ENCODE measurements at regions of chr15 and their contacts with region 1.

Region 1: DNA sequence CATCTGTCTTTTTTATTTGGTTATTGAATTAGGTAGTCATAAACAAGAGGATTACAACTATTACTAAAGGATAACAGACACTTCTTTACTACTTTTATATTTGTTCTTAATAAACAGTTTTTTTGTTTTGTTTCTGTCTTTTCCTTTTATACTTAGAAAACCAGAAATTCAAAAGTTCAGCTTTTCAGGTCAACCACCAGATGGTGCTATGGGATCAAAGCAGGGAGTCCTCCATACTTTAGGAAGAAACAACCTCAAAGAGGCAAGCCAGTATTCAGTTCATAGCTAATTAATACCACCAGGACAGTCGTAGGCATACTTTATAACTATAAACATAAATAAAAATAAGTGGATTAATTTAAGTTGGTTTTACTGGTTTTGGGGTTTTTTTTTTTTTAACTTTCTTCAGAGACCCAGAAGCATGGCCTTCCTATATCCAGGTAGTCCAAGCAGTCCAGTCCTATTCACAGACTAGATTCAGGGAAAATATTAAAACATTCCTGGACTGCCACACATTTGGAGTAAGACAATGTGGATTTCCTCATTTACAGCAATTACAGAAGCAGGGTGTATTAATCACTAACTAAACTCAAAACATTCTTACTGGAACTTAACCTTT is 16.0 kb upstream of the EID1 start:
- DNase-seq: no peak
- ATAC-seq: peak in 3 of 4 donors; percentile 56 to 85 (median 61)
- H3K4me3 ChIP-seq: no peak overlapping the region
- H3K27ac ChIP-seq: no peak overlapping the region
- H3K4me1 ChIP-seq: no peaks in the 10 kb centered on the region
- H3K27me3 ChIP-seq: no peaks in the 10 kb centered on the region
- CTCF ChIP-seq: peak; percentile 94

Region 2: DNA sequence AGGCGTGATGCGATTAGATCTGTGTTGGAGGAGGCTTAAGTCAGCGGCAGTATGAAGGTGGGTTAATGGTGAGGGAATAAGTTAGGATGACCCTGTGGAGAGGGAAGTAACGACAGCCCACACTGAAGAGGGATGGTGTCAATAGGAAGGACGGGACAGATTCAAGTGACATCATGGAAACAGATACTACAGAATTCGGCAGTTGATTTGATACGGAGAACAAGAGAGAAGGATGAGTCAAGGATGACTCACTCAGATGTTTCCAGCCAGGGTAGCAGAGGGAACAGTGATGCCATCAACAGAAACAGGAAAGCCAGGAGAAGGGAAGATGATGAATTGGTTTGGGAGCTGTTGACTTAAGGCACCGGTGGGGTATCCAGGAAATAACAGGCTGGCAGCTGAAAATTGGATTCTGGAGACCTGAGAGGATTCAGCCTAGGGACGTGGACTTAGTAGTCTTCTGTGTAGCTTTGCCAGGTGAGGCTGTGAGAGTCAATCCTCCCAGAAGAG is 63.8 kb after region 1 on chr15:
- intact Hi-C with region 1: no loop called
- DNase-seq: no peak
- ATAC-seq: peak; percentile 56 to 71 (median 62)
- H3K4me3 ChIP-seq: no peak overlapping the region
- H3K27ac ChIP-seq: no peak overlapping the region
- H3K4me1 ChIP-seq: no peaks in the 10 kb centered on the region
- H3K27me3 ChIP-seq: peaks cover 0 to 4% (median 0%) of the 10 kb centered on the region in 3 donors
- CTCF ChIP-seq: no peak

Region 3: DNA sequence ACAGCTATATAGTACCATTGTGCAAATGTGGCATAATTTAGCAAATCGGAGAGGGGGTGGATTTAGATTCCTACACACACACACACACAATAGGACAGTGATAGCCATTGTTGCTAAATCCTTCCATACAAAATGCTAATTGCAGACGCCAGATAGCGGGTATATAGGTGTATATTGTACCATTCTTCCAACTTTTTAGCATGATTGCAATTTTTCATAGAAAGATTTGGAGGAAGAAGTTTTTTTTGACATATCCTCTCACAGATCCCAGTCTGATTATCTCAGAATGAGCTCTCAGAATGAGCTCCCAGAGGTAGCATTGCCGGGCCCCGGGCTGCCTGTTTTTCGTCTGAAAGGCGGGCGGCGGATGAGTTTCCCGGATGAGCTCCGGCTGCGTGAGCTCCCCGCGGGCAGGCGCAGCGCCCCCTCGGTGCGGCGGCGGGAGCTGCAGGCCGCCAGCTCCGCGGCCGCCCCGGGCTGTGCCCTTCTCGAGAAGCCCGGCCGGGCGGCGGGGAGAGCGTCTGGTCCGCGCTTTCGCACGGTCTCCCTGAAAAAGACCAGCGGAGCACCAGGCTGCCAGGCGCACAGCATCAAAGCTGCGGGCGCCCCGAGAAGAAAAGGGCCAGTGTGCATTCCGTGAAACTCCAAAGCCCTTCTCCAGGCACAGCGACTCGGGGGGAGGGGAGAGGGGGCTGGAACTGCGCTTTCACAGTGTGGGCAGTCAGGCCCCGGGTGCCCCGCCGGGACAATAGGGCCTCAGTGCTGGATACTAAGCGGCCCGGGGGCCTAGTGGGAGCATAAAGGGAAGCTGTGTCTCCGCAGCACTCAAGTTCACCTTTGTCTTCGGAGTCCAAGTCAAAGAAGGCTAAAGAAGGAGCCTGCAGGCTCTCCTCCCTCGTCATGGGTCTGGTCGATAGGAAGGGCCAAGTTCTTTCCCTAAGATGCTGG is 113.8 kb after region 1 on chr15:
- intact Hi-C with region 1: loop called (anchors 2 to 5 kb)
- DNase-seq: peak; percentile 81 to 87
- ATAC-seq: peak; percentile 97 to 100 (median 98)
- H3K4me3 ChIP-seq: peak overlapping the region; percentile 65
- H3K27ac ChIP-seq: peak overlapping the region; percentile 44
- H3K4me1 ChIP-seq: peaks cover 4% of the 10 kb centered on the region
- H3K27me3 ChIP-seq: no peaks in the 10 kb centered on the region
- CTCF ChIP-seq: peak; percentile 94

Region 4: GRCh38 chr15:49135893-49136292 is 274.0 kb after region 1 on chr15:
- intact Hi-C with region 1: loop called in 1 of 2 experiments (anchors 1 kb)
- DNase-seq: no peak
- ATAC-seq: no peak
- H3K4me3 ChIP-seq: no peak overlapping the region
- H3K27ac ChIP-seq: no peak overlapping the region
- H3K4me1 ChIP-seq: no peaks in the 10 kb centered on the region
- H3K27me3 ChIP-seq: no peaks in the 10 kb centered on the region
- CTCF ChIP-seq: no peak

Region 5: DNA sequence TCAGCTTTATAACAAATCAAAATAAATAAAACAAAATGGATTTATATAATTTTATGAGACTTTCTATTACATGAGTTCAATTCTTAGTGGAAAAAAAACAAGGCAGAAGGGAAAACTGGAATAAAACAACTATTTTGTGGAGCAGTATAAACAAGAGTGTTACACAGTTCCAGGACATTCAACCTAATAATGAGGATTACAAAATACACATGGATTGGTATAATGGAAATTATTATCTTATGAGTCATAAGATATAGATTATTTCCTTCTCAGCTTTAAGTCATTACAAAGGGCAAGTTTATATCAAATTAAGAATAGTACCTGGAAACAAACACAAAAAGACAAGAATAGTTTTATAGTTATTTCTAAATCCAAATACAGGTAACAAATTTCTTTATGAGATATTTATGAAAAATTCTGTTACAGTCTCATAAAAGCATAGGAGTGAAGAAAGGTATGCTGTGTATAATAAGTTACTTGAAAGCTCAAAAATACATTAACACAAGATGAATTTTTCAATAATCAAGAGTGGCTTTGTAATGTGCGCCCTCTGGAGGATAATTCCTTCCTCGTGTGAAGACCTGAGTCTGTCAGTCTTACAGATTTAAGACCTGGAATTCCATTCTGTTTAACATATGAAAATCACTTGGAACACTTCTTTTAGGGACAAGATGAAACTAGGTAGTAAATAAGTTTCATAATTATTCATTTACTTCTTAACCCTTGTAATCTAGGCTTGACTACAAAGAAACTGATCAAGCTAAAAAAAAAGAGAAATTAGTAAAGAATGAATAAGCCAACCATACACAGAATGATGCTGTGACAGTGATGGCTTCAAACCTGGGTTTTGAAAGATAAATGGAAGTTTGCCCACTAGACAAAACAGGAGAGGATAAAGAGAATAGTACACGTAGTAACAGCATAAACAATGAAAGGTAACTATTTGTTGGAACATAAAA is 284.0 kb after region 1 on chr15:
- intact Hi-C with region 1: loop called (anchors 2 to 10 kb)
- DNase-seq: no peak
- ATAC-seq: peak in 1 of 4 donors; percentile 58
- H3K4me3 ChIP-seq: no peak overlapping the region
- H3K27ac ChIP-seq: no peak overlapping the region
- H3K4me1 ChIP-seq: peaks cover 32% of the 10 kb centered on the region
- H3K27me3 ChIP-seq: no peaks in the 10 kb centered on the region
- CTCF ChIP-seq: peak; percentile 53

Region 6: GRCh38 chr15:49155110-49155833 is 293.4 kb after region 1 on chr15 and contains the start of gene COPS2:
- intact Hi-C with region 1: loop called in 1 of 2 experiments (anchors 10 kb)
- DNase-seq: peak; percentile 91 to 95
- ATAC-seq: peak; percentile 98 to 99 (median 98)
- H3K4me3 ChIP-seq: peak within 1 kb of the TSS; percentile 91
- H3K27ac ChIP-seq: peak within 1 kb of the TSS; percentile 91
- H3K4me1 ChIP-seq: peaks cover 31% of the 10 kb centered on the region
- H3K27me3 ChIP-seq: no peaks in the 10 kb centered on the region
- CTCF ChIP-seq: no peak
- total RNA-seq, gene COPS2: 109 to 160 (median 137) TPM

Region 7: GRCh38 chr15:49242820-49243219 is 380.9 kb after region 1 on chr15:
- intact Hi-C with region 1: no loop called
- DNase-seq: peak; percentile 24 to 35
- ATAC-seq: no peak
- H3K4me3 ChIP-seq: no peak overlapping the region
- H3K27ac ChIP-seq: no peak overlapping the region
- H3K4me1 ChIP-seq: no peaks in the 10 kb centered on the region
- H3K27me3 ChIP-seq: no peaks in the 10 kb centered on the region
- CTCF ChIP-seq: no peak

Region 8: GRCh38 chr15:49421991-49422390 is 560.1 kb after region 1 on chr15:
- intact Hi-C with region 1: loop called in 1 of 2 experiments (anchors 5 kb)
- DNase-seq: peak; percentile 39 to 62
- ATAC-seq: peak; percentile 62 to 94 (median 75)
- H3K4me3 ChIP-seq: peak overlapping the region; percentile 53
- H3K27ac ChIP-seq: no peak overlapping the region
- H3K4me1 ChIP-seq: no peaks in the 10 kb centered on the region
- H3K27me3 ChIP-seq: no peaks in the 10 kb centered on the region
- CTCF ChIP-seq: peak; percentile 83

Region 9: GRCh38 chr15:50145451-50145872 is 1283.5 kb after region 1 on chr15:
- intact Hi-C with region 1: loop called (anchors 5 to 10 kb)
- DNase-seq: no peak
- ATAC-seq: peak; percentile 70 to 86 (median 83)
- H3K4me3 ChIP-seq: no peak overlapping the region
- H3K27ac ChIP-seq: no peak overlapping the region
- H3K4me1 ChIP-seq: no peaks in the 10 kb centered on the region
- H3K27me3 ChIP-seq: no peaks in the 10 kb centered on the region
- CTCF ChIP-seq: peak; percentile 56